Ascending aorta (tissue), 2 donors: ENCODE measurements at regions of chr10 and their contacts with region 1.

Region 1: GRCh38 chr10:91340613-91341362 is 69.4 kb upstream of the HECTD2 start:
- DNase-seq: peak in 1 of 2 donors; percentile 74
- H3K4me3 ChIP-seq: no peak overlapping the region
- H3K27ac ChIP-seq: peak overlapping the region in 1 of 2 donors; percentile 46
- H3K4me1 ChIP-seq: no peaks in the 10 kb centered on the region
- H3K27me3 ChIP-seq: no peaks in the 10 kb centered on the region
- CTCF ChIP-seq: no peak

Region 2: GRCh38 chr10:91198781-91199180 is 142.0 kb before region 1 on chr10:
- intact Hi-C with region 1: loop called (anchors 10 kb)
- DNase-seq: no peak
- H3K4me3 ChIP-seq: no peak overlapping the region
- H3K27ac ChIP-seq: peak overlapping the region; percentile 43 to 58
- H3K4me1 ChIP-seq: peaks cover 0 to 16% of the 10 kb centered on the region in 2 donors
- H3K27me3 ChIP-seq: no peaks in the 10 kb centered on the region
- CTCF ChIP-seq: no peak